IMR-90 (cell line): ENCODE measurements at regions of chrX and their contacts with region 1.

Region 1: DNA sequence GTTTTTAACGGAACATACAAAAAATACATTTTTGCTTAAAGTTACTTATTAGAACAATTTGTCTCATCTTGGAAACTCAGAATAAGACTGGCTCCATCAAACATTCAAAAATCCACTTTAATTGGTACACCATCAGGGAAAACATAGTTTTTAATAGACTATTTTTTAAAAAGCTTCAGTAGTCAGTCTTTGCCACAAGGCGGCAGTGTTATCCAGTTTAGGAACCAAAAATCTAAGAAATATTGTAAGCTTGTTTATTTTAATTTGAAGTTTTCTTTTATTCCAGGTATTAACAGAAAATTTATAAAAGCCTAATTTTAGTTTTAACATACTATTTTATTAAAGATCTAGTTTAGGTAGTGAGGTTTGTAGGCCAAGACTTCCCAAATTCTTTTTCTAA is 107.7 kb downstream of the APOOL start:
- DNase-seq: peak; percentile 5
- ATAC-seq: no peak
- H3K4me3 ChIP-seq: no peak overlapping the region
- H3K27ac ChIP-seq: no peak overlapping the region
- H3K4me1 ChIP-seq: no peaks in the 10 kb centered on the region
- H3K27me3 ChIP-seq: no peaks in the 10 kb centered on the region
- CTCF ChIP-seq: peak; percentile 74
- POLR2A ChIP-seq: no peak
- RAD21 ChIP-seq: peak; percentile 51

Region 2: DNA sequence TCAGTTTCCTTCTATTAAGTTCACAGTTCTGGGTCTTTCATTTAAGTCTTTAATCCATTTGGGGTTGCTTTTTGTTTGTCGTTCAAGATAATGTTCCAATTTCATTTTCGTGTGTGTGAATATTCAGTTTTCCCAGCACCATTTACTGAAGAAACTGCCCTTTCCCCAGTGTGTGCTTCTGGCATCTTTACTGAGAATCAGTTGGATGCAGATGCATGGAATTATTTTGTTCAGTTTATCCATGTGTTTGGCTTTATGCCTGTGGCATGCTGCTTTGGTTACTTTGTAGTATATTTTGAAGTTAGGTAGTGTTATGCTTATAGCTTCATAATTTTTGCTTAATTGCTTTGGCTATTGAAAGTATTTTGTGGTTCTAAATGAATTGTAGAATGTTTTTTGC is 445.3 kb before region 1 on chrX:
- CTCF ChIA-PET with region 1: no interaction called
- POLR2A ChIA-PET with region 1: no interaction called
- dilution Hi-C with region 1: no loop called
- in situ Hi-C with region 1: no loop called
- intact Hi-C with region 1: no loop called
- DNase-seq: no peak
- ATAC-seq: no peak
- H3K4me3 ChIP-seq: no peak overlapping the region
- H3K27ac ChIP-seq: no peak overlapping the region
- H3K4me1 ChIP-seq: no peaks in the 10 kb centered on the region
- H3K27me3 ChIP-seq: no peaks in the 10 kb centered on the region
- CTCF ChIP-seq: no peak
- POLR2A ChIP-seq: no peak
- RAD21 ChIP-seq: no peak

Region 3: GRCh38 chrX:84747516-84747915 is 363.8 kb before region 1 on chrX:
- CTCF ChIA-PET with region 1: no interaction called
- POLR2A ChIA-PET with region 1: no interaction called
- dilution Hi-C with region 1: no loop called
- in situ Hi-C with region 1: no loop called
- intact Hi-C with region 1: no loop called
- DNase-seq: no peak
- ATAC-seq: no peak
- H3K4me3 ChIP-seq: no peak overlapping the region
- H3K27ac ChIP-seq: no peak overlapping the region
- H3K4me1 ChIP-seq: no peaks in the 10 kb centered on the region
- H3K27me3 ChIP-seq: no peaks in the 10 kb centered on the region; the same call in 1 of the 2 replicates
- CTCF ChIP-seq: no peak
- POLR2A ChIP-seq: no peak
- RAD21 ChIP-seq: no peak

Region 4: DNA sequence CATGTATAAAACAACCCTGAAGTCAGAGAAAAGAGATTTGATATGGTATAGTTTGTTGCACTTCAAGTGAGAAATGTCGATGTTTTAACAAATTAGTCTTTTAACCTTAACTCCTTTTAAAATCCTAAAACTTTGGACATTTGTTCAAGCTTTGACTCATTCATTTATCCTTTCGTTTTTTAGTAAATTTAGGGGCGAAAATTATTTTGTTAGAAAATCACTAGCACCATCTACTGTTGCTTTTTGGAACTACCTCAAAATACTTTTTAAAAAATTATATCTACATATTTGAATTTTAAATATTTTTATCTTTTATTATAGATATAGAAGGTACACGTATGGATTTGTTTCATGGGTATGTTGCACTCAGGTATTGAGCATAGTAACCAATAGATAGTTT is 433.3 kb after region 1 on chrX:
- CTCF ChIA-PET with region 1: no interaction called
- POLR2A ChIA-PET with region 1: no interaction called
- dilution Hi-C with region 1: loop called (anchors 25 kb)
- in situ Hi-C with region 1: loop called (anchors 10 kb)
- intact Hi-C with region 1: loop called (anchors 1 kb)
- DNase-seq: no peak
- ATAC-seq: no peak
- H3K4me3 ChIP-seq: no peak overlapping the region
- H3K27ac ChIP-seq: no peak overlapping the region
- H3K4me1 ChIP-seq: no peaks in the 10 kb centered on the region
- H3K27me3 ChIP-seq: no peaks in the 10 kb centered on the region
- CTCF ChIP-seq: peak; percentile 48
- POLR2A ChIP-seq: no peak
- RAD21 ChIP-seq: peak; percentile 33; the same call in 1 of the 2 replicates

Region 5: GRCh38 chrX:86103061-86103460 is 991.7 kb after region 1 on chrX:
- CTCF ChIA-PET with region 1: no interaction called
- POLR2A ChIA-PET with region 1: no interaction called
- dilution Hi-C with region 1: no loop called
- in situ Hi-C with region 1: no loop called
- intact Hi-C with region 1: no loop called
- DNase-seq: no peak
- ATAC-seq: no peak
- H3K4me3 ChIP-seq: no peak overlapping the region
- H3K27ac ChIP-seq: no peak overlapping the region
- H3K4me1 ChIP-seq: no peaks in the 10 kb centered on the region
- H3K27me3 ChIP-seq: no peaks in the 10 kb centered on the region
- CTCF ChIP-seq: no peak
- POLR2A ChIP-seq: no peak
- RAD21 ChIP-seq: no peak